ENCODE measurements at regions of chr10 and their contacts with region 1.

Region 1: GRCh38 chr10:72048450-72049124 is 39.8 kb downstream of the SPOCK2 start:
- DNase-seq: peak; percentile 81
- ATAC-seq: peak; percentile 98
- H3K4me3 ChIP-seq: no peak overlapping the region
- H3K27ac ChIP-seq: no peak overlapping the region
- H3K4me1 ChIP-seq: peaks cover 3% of the 10 kb centered on the region; the same call in 1 of the 2 replicates
- H3K27me3 ChIP-seq: no peaks in the 10 kb centered on the region
- CTCF ChIP-seq: peak; percentile 99 to 100 (median 99); a peak in 5 of 6 replicates
- EP300 ChIP-seq: no peak
- POLR2A ChIP-seq: no peak
- RAD21 ChIP-seq: peak; percentile 98

Region 2: DNA sequence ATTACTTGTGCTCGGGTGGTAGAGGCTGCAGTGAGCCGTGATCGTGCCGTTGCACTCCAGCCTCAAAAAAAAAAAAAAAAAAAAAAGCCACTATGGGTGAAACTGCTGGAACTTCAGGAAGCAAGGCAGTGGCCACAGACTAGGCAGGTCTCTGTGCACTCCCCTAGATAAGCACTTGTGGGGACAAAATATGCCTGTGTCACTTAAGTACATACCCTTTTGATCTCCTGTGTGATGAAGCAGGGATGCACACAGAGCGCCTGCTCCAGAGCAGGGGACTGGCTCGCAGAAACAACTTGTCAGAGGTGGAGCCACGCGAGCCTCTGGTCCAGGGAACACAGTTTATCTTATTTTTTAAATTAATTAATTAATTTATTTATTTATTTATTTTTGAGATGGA is 154.7 kb before region 1 on chr10:
- CTCF ChIA-PET with region 1: interaction called, 136 read pairs
- POLR2A ChIA-PET with region 1: interaction called, 4 read pairs
- RAD21 ChIA-PET with region 1: interaction called, 90 read pairs
- SMC1A ChIA-PET with region 1: interaction called, 107 read pairs
- in situ Hi-C with region 1: no loop called
- intact Hi-C with region 1: loop called (anchors 1 kb)
- DNase-seq: no peak
- ATAC-seq: no peak
- H3K4me3 ChIP-seq: no peak overlapping the region
- H3K27ac ChIP-seq: no peak overlapping the region
- H3K4me1 ChIP-seq: peaks cover 16% of the 10 kb centered on the region
- H3K27me3 ChIP-seq: no peaks in the 10 kb centered on the region
- CTCF ChIP-seq: no peak
- EP300 ChIP-seq: no peak
- POLR2A ChIP-seq: no peak
- RAD21 ChIP-seq: no peak

Region 3: DNA sequence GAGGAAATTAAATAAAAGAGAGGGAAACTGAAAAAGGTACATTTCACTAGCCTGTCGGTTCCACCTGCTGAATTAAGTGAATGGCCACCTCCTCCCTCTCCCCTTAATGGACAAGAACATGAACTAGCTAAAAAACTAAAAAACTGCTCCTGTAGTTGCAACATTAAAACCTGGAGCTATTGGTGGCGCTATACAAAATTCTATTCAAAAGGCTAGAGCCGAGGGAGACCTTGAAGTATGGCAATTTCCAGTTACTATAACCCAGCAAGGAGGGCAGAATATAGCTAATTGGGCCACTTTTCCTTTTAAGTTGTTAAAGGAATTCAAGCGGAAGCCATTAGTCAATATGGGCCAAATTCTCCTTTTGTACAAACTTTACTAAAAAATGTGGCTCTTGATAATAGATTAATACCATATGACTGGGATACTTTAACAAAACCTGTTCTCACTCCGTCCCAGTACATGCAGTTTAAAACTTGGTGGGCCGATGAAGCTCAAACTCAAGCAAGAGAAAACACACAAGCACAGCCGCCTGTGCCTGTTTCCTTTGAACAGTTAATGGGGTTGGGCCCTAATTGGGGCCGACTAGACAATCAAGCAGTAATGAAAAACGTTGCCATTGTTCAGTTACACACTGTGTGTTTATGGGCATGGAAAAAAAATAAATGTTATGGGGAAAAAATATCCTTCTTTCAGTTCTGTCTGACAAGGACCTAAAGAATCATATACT is 90.9 kb before region 1 on chr10:
- CTCF ChIA-PET with region 1: interaction called, 214 read pairs
- POLR2A ChIA-PET with region 1: no interaction called
- RAD21 ChIA-PET with region 1: interaction called, 127 read pairs
- SMC1A ChIA-PET with region 1: interaction called, 101 read pairs
- in situ Hi-C with region 1: loop called (anchors 5 kb)
- intact Hi-C with region 1: loop called (anchors 1 kb)
- DNase-seq: no peak
- ATAC-seq: no peak
- H3K4me3 ChIP-seq: no peak overlapping the region
- H3K27ac ChIP-seq: no peak overlapping the region
- H3K4me1 ChIP-seq: no peaks in the 10 kb centered on the region
- H3K27me3 ChIP-seq: peaks cover 0 to 3% of the 10 kb centered on the region in 2 experiments; a peak in 1 of 4 replicates
- CTCF ChIP-seq: no peak
- EP300 ChIP-seq: no peak
- POLR2A ChIP-seq: no peak
- RAD21 ChIP-seq: no peak

Region 4: GRCh38 chr10:72061491-72061890 is 12.9 kb after region 1 on chr10:
- CTCF ChIA-PET with region 1: interaction called, 65 read pairs
- POLR2A ChIA-PET with region 1: interaction called, 5 read pairs
- RAD21 ChIA-PET with region 1: interaction called, 64 read pairs
- SMC1A ChIA-PET with region 1: interaction called, 72 read pairs
- in situ Hi-C with region 1: no loop called
- intact Hi-C with region 1: no loop called
- DNase-seq: no peak
- ATAC-seq: peak; percentile 69
- H3K4me3 ChIP-seq: no peak overlapping the region
- H3K27ac ChIP-seq: no peak overlapping the region
- H3K4me1 ChIP-seq: peaks cover 9% of the 10 kb centered on the region
- H3K27me3 ChIP-seq: no peaks in the 10 kb centered on the region
- CTCF ChIP-seq: peak; percentile 16 to 55 (median 53); a peak in 4 of 6 replicates
- EP300 ChIP-seq: no peak
- POLR2A ChIP-seq: no peak
- RAD21 ChIP-seq: peak; percentile 37; the same call in 1 of the 2 replicates

Region 5: DNA sequence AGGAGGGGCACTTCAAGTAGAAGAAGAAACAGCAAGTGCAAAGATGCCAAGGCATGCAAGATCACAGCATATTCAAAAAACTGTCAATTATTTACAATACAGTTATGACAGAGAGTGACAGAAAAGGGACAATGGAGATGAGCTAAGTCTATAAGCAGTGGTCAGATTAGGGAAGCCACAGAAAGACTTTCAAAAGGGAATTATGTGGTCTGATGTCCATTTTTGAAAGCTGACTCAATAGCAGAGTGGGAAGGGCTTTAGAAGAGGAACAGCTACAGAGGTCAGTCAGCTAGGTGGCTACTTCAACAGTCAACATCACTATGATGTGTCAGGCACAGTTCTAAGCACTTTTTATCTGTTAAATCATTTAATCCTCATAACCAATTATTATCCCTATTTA is 84.9 kb after region 1 on chr10:
- CTCF ChIA-PET with region 1: interaction called, 18 read pairs
- POLR2A ChIA-PET with region 1: interaction called, 3 read pairs
- RAD21 ChIA-PET with region 1: interaction called, 25 read pairs
- SMC1A ChIA-PET with region 1: interaction called, 25 read pairs
- in situ Hi-C with region 1: no loop called
- intact Hi-C with region 1: no loop called
- DNase-seq: peak; percentile 92
- ATAC-seq: peak; percentile 91
- H3K4me3 ChIP-seq: 0 out of 2 replicates have a peak overlapping the region, but pooled peaks have one; percentile 4
- H3K27ac ChIP-seq: peak overlapping the region; percentile 75
- H3K4me1 ChIP-seq: peaks cover 42% of the 10 kb centered on the region
- H3K27me3 ChIP-seq: no peaks in the 10 kb centered on the region
- CTCF ChIP-seq: no peak
- EP300 ChIP-seq: peak; percentile 84 to 96; a peak in 3 of 4 replicates
- POLR2A ChIP-seq: no peak
- RAD21 ChIP-seq: no peak

Region 6: GRCh38 chr10:72260588-72261322 is 212.2 kb after region 1 on chr10:
- CTCF ChIA-PET with region 1: interaction called, 6 read pairs
- POLR2A ChIA-PET with region 1: no interaction called
- RAD21 ChIA-PET with region 1: interaction called, 18 read pairs
- SMC1A ChIA-PET with region 1: interaction called, 3 read pairs
- in situ Hi-C with region 1: no loop called
- intact Hi-C with region 1: no loop called
- DNase-seq: peak; percentile 88
- ATAC-seq: peak; percentile 80
- H3K4me3 ChIP-seq: peak overlapping the region; percentile 68
- H3K27ac ChIP-seq: peak overlapping the region; percentile 95
- H3K4me1 ChIP-seq: peaks cover 68% of the 10 kb centered on the region
- H3K27me3 ChIP-seq: no peaks in the 10 kb centered on the region
- CTCF ChIP-seq: peak in 2 of 3 experiments; percentile 15 to 39; a peak in 2 of 6 replicates
- EP300 ChIP-seq: no peak; a peak in 2 of 4 replicates
- POLR2A ChIP-seq: peak; percentile 77
- RAD21 ChIP-seq: peak; percentile 9; the same call in 1 of the 2 replicates

Region 7: GRCh38 chr10:72337020-72337629 is 288.5 kb after region 1 on chr10:
- CTCF ChIA-PET with region 1: interaction called, 152 read pairs
- POLR2A ChIA-PET with region 1: interaction called, 6 read pairs
- RAD21 ChIA-PET with region 1: interaction called, 107 read pairs
- SMC1A ChIA-PET with region 1: interaction called, 62 read pairs
- in situ Hi-C with region 1: loop called (anchors 5 kb)
- intact Hi-C with region 1: loop called (anchors 1 kb)
- DNase-seq: no peak
- ATAC-seq: peak; percentile 11; the same call in 1 of the 3 replicates
- H3K4me3 ChIP-seq: no peak overlapping the region
- H3K27ac ChIP-seq: peak overlapping the region; percentile 1; the same call in 1 of the 2 replicates
- H3K4me1 ChIP-seq: peaks cover 61% of the 10 kb centered on the region
- H3K27me3 ChIP-seq: no peaks in the 10 kb centered on the region
- CTCF ChIP-seq: peak; percentile 95 to 98 (median 96)
- EP300 ChIP-seq: no peak
- POLR2A ChIP-seq: peak; percentile 18; the same call in 1 of the 2 replicates
- RAD21 ChIP-seq: peak; percentile 91

Measured in GM12878 (cell line).